BJ (cell line): ENCODE measurements at regions of chr3 and their contacts with region 1.

Region 1: DNA sequence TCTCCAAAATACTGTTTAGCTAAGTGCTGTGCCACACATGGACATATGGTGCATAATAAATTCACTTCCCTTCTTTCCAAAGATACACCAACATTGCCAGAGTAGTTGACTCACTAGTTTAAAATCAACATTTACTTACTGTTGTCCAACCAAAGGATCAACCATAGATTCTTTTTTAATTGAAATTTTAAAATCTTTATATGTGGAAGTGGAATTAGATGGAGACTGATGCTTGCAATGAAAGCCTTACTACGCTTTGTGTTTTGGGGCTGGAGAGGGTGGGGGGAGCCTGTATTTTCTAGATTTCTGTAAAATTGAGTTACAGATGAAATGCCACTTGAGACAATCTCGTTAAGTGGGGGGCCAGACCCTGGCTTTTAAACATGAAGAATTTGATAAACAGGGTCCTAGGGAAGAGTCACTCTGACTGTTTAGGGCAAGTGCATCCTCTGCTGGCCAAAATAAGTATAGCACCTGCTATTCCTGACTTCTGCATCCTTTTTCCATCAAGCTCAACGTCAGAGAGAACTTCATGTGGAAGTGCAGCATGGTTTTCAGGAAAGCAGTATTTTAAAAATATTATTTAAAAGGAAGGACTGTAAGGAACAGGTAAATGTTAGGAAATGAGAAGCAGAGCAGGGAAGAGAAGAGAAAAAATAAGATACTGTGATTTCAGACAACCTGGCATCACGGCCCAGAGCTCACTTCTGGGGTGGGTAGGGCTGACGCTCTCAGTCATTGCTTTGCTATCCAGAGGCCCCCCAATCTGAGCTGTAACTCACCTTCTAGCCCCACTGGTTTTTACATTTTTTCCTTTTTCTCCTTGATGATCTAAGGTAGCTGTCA is 76.7 kb downstream of the BOC start:
- DNase-seq: peak; percentile 15
- H3K4me3 ChIP-seq: no peak overlapping the region
- H3K27me3 ChIP-seq: no peaks in the 10 kb centered on the region
- CTCF ChIP-seq: peak; percentile 99

Region 2: GRCh38 chr3:113051302-113051711 is 236.7 kb before region 1 on chr3:
- CTCF ChIA-PET with region 1: interaction called, 53 read pairs
- POLR2A ChIA-PET with region 1: no interaction called
- DNase-seq: no peak
- H3K4me3 ChIP-seq: no peak overlapping the region
- H3K27me3 ChIP-seq: 0 out of 2 replicates have a peak, but pooled peaks cover 2% of the 10 kb centered on the region
- CTCF ChIP-seq: peak; percentile 81

Region 3: GRCh38 chr3:113148286-113148685 is 139.7 kb before region 1 on chr3:
- CTCF ChIA-PET with region 1: interaction called, 12 read pairs
- POLR2A ChIA-PET with region 1: no interaction called
- DNase-seq: no peak
- H3K4me3 ChIP-seq: no peak overlapping the region
- H3K27me3 ChIP-seq: peaks cover 2% of the 10 kb centered on the region
- CTCF ChIP-seq: no peak

Region 4: DNA sequence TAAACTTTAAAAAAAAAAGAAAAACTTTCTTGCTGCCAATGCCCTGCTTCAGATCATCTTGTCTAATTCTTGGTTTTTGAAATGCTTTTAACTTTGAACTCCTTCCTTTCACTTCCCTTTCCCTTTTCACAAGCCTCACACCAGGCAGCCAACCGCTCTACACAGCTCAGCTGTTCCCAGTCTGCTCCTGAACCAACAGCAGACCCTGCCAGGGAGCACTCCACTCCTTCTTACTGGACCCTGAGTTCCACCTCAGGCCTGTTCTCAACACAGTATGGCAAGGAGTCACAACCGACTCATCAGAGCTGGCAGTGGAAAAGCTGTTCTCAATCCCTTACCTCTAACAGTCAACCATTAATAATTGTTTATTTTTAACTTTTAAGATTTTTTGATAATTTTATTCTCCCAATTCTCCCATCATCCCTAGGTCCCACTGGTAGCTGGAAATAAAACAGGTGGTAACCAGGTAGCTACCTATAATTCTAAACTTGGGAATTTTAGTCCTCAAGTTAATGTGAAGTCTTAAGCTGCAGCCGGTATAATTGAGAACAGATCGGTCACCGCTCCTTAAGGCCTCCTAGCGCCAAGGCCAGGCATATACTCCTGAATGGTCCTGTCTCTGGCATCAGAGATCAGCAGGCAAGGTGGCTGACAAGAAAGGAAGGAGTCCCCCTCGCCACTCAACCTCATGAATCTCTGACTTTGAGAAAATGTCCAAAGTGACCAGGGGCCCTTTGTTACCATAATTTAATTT is 32.7 kb before region 1 on chr3:
- CTCF ChIA-PET with region 1: interaction called, 11 read pairs
- POLR2A ChIA-PET with region 1: no interaction called
- DNase-seq: no peak
- H3K4me3 ChIP-seq: no peak overlapping the region
- H3K27me3 ChIP-seq: no peaks in the 10 kb centered on the region
- CTCF ChIP-seq: no peak

Region 5: DNA sequence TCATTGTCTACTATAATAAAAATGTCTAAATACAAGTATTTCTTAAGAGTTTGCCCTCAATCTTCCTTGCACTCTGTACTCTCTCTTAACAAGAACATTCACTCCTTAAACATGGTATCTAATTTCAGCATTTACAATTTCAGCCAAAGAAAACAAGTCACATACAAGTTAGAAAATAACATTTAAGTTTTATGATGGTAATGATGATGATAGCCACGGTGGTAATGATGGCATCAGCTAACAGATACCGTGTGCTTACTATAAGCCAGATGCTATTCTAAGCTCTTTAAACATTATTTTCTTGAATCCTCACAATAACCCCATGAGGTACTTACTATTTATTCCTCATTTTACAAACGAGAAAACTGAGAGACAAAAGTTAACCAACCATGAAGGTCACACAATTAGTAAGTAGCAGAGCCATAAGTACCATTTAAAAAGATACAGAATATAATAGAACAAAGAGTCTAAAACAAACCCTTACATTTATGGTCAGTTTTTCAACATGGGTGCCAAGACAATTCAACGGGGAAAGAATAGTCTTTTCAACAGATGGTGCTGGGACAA is 219.6 kb after region 1 on chr3:
- CTCF ChIA-PET with region 1: no interaction called
- POLR2A ChIA-PET with region 1: no interaction called
- DNase-seq: no peak
- H3K4me3 ChIP-seq: no peak overlapping the region
- H3K27me3 ChIP-seq: no peaks in the 10 kb centered on the region
- CTCF ChIP-seq: no peak